Activated CD4-positive, alpha-beta T cell treated with anti-CD3 and anti-CD28 coated beads, Interleukin-2, amount 10 ng/mL, durations not matched to agents 24 days and 14 days (primary cell): ENCODE measurements at regions of chr12 and their contacts with region 1.

Region 1: GRCh38 chr12:6635856-6636531 is at the start of gene LPAR5:
- DNase-seq: no peak
- H3K4me3 Mint-ChIP-seq: peak within 1 kb of the TSS; percentile 56
- H3K27ac Mint-ChIP-seq: peak within 1 kb of the TSS; percentile 87
- H3K4me1 Mint-ChIP-seq: peaks cover 42% of the 10 kb centered on the region
- H3K27me3 Mint-ChIP-seq: peaks cover 1% of the 10 kb centered on the region
- total RNA-seq, gene LPAR5: 3.3 and 4.2 TPM in 2 replicates

Region 2: DNA sequence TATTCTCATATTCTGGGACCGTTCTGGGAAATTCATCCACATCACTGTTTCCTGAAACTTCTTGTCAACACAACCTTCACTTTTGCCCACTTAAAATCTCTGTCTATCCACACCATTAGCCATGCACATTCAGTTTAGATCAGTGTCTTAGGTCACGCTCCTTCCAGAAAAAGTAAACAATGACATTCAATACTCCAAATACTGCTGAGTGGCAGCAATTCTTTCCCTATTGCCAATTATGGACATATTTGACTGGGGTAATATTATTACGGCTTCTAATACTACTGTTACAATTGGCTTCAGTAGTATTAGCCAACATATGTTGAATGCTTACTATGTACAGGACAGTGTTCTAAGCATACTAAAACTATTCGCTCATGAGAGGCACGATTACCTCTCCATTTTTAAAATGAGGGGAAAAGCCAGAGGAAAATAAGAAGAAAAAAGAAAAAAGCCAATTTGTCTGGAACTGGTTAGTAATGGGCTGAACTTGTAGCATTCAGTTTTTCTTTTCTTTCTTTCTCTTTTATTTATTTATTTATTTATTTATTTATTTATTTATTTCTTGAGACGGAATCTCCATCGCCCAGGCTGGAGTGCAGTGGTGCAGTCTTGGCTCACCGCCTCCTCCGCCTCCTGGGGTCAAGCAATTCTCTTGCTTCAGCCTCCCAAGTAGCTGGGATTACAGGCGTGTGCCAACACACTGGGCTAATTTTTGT is 228.6 kb before region 1 on chr12:
- intact Hi-C with region 1: no loop called
- DNase-seq: no peak
- H3K4me3 Mint-ChIP-seq: no peak overlapping the region
- H3K27ac Mint-ChIP-seq: no peak overlapping the region
- H3K4me1 Mint-ChIP-seq: no peaks in the 10 kb centered on the region
- H3K27me3 Mint-ChIP-seq: peaks cover 19% of the 10 kb centered on the region

Region 3: GRCh38 chr12:6613776-6614512 is 22.1 kb before region 1 on chr12:
- intact Hi-C with region 1: loop called (anchors 1 kb)
- DNase-seq: peak; percentile 69
- H3K4me3 Mint-ChIP-seq: no peak overlapping the region
- H3K27ac Mint-ChIP-seq: peak overlapping the region; percentile 39
- H3K4me1 Mint-ChIP-seq: peaks cover 34% of the 10 kb centered on the region
- H3K27me3 Mint-ChIP-seq: no peaks in the 10 kb centered on the region